ENCODE measurements at regions of chr17 and their contacts with region 1.

Region 1: GRCh38 chr17:48593840-48594537 is 410 bp upstream of the HOXB5 start:
- DNase-seq: peak in 1 of 2 donors; percentile 79
- H3K4me3 ChIP-seq: peak overlapping the region; percentile 41 to 68 (median 43)
- H3K27ac ChIP-seq: no peak overlapping the region
- H3K4me1 ChIP-seq: peaks cover 0 to 10% of the 10 kb centered on the region in 2 donors
- H3K27me3 ChIP-seq: peaks cover 0 to 82% of the 10 kb centered on the region in 2 donors
- CTCF ChIP-seq: peak; percentile 70 to 81 (median 73)
- POLR2A ChIP-seq: no peak

Region 2: GRCh38 chr17:48492401-48493298 is 101.3 kb before region 1 on chr17:
- intact Hi-C with region 1: loop called (anchors 5 kb)
- DNase-seq: peak; percentile 34 to 76
- H3K4me3 ChIP-seq: peak overlapping the region; percentile 29 to 62 (median 36)
- H3K27ac ChIP-seq: peak overlapping the region in 1 of 2 donors; percentile 10
- H3K4me1 ChIP-seq: peaks cover 3 to 6% of the 10 kb centered on the region in 2 donors
- H3K27me3 ChIP-seq: peaks cover 0 to 22% of the 10 kb centered on the region in 2 donors
- CTCF ChIP-seq: peak; percentile 67 to 94 (median 72)
- POLR2A ChIP-seq: no peak

Region 3: GRCh38 chr17:48608494-48608834 is 14.5 kb after region 1 on chr17:
- intact Hi-C with region 1: loop called (anchors 1 kb)
- DNase-seq: no peak
- H3K4me3 ChIP-seq: no peak overlapping the region
- H3K27ac ChIP-seq: no peak overlapping the region
- H3K4me1 ChIP-seq: no peaks in the 10 kb centered on the region
- H3K27me3 ChIP-seq: peaks cover 10 to 97% of the 10 kb centered on the region in 2 donors
- CTCF ChIP-seq: no peak
- POLR2A ChIP-seq: no peak

Measured in breast epithelium (tissue), 4 donors.